ENCODE measurements at regions of chr4 and their contacts with region 1.

Region 1: DNA sequence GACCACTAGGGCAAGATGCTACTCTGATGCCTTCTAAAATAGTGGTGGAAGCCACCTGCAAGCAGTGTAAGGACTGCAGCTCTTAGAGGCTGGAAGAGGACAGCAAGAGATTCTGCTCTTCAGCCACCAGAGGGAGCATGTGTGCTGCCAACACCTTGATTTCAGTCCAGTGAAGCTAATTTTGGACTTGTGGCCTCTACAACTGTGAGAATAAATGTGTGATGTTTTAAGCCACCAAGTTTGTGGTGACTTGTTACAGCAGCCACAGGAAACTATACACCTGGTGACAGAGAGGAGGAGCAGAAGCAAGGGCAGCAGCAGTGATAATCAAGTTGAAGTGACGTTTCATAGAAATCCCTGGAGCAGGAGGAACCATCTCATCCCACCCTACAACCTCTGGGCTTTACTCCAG is 55.9 kb downstream of the FGFBP1 start:
- DNase-seq: no peak
- H3K4me3 ChIP-seq: no peak overlapping the region
- H3K27ac ChIP-seq: no peak overlapping the region
- H3K4me1 ChIP-seq: peaks cover 0 to 4% (median 0%) of the 10 kb centered on the region in 6 donors
- H3K27me3 ChIP-seq: no peaks in the 10 kb centered on the region
- CTCF ChIP-seq: peak; percentile 56 to 94 (median 82)
- POLR2A ChIP-seq: no peak

Region 2: DNA sequence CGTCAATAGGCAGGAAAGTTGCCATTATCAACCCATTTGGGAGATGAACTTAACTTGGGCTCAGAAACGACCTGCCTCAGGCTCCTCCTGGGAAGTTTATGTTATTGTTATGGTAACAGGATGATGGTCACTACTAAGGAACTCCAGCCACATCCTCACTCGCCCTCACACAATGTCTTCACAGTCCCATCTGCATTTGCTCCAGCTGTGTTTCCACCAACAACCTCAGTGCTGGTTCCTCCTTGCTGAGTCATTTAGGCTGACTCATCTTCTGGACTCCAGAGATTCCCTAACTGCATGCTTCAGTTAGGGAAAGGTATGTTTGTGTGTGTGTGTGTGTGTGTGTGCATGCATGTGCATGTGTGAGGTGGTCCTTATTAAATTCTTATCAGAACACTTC is 1961.8 kb before region 1 on chr4:
- intact Hi-C with region 1: no loop called
- DNase-seq: no peak
- H3K4me3 ChIP-seq: no peak overlapping the region
- H3K27ac ChIP-seq: no peak overlapping the region
- H3K4me1 ChIP-seq: no peaks in the 10 kb centered on the region
- H3K27me3 ChIP-seq: no peaks in the 10 kb centered on the region
- CTCF ChIP-seq: no peak
- POLR2A ChIP-seq: no peak

Region 3: DNA sequence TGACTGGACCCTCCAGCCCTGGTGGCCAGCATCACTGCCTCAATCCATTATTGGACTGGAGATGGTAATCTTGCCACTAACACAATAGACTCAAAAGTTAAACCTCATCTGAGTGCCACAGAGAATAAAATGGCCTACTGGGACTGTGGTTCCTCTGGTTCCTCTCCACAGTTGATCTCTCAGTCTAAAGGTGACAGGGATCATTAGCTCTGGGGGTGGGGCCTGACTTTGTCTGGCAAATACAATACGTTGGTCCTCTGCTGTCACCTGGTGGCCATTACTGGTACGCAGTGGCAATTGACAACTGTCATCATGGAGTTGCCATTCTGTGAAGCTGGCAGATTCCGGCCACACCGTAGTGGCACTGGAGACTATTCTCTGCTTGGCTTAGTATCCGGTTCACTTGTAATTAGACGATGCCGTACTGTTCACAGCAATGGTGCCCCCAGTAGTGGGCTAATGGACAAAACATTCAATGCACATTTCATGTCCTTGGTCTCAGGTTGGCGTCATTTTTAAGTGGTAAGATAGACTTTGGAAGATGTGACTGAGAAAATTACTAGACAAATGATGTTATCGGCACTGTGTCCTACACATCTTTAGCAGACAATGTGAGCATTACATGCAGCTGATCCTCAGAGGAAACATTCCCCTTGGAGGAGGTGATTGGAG is 73.6 kb after region 1 on chr4:
- intact Hi-C with region 1: loop called (anchors 2 kb)
- DNase-seq: peak; percentile 88
- H3K4me3 ChIP-seq: no peak overlapping the region
- H3K27ac ChIP-seq: no peak overlapping the region
- H3K4me1 ChIP-seq: peaks cover 0 to 11% (median 2%) of the 10 kb centered on the region in 6 donors
- H3K27me3 ChIP-seq: no peaks in the 10 kb centered on the region
- CTCF ChIP-seq: peak; percentile 65 to 96 (median 84)
- POLR2A ChIP-seq: no peak

Region 4: DNA sequence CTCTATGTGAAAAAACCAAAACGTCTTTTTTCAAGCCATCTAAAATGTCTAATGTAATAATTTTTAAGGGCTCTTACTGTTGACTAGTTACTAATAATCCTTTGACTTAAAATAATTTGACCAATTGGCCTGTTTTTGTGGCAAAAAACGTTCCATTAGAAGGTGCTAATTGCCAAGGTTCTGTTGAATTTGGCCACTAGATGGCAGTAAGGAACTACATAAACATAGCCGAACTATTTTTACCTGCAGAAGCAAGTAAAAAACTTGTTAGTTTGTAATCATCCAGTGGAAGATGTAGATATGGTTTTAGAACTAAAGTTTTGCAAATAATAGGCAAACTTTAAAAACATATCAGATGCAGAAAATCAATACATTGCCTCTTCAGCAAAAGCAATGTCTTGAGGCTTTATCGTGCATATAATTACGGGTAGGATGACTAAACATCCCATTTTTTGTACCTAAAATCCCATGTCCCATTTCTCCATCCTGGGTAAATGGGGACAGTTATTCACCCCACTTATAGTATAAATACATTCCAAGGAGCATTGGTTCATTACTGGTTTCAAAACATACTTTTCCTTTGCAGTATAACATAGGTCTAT is 143.6 kb after region 1 on chr4:
- intact Hi-C with region 1: no loop called
- DNase-seq: no peak
- H3K4me3 ChIP-seq: no peak overlapping the region
- H3K27ac ChIP-seq: no peak overlapping the region
- H3K4me1 ChIP-seq: peaks cover 3 to 20% (median 6%) of the 10 kb centered on the region in 6 donors
- H3K27me3 ChIP-seq: peaks cover 0 to 5% (median 0%) of the 10 kb centered on the region in 7 donors
- CTCF ChIP-seq: peak; percentile 66 to 88 (median 82)
- POLR2A ChIP-seq: no peak

Measured in spleen (tissue), 13 donors.